Naive thymus-derived CD4-positive, alpha-beta T cell (primary cell): ENCODE measurements at regions of chr7 and their contacts with region 1.

Region 1: DNA sequence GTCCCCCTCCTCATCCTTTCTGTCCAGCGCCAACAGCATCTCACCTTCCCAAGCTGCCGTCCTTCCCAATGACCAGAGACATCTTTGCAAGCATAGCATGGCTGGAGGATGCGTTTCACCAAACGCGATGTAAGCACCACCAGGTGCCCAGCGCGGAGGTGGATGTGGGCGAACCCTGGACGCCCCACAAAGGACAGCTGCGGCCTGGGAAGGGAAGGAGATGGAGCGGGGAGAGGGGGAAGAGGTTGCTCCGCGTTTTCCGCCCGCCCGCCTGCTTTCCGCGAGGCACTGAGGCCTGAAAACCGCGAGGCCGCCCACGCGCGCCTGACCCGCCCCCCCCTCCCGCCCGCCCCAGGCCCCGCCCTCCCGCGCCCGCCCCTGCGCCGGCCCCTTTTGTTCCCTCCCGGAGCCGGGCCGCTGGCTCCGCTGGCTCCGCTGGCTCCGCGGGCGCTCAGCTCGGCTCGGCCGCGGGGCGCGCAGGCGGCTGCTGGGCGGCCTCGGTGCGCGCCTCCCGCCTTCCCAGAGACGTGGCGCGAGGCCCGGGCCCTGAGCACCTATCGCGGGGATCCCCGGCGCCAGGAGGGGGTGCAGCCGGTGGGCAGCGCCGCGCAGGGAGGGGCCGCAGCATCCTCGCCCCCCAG is at the start of gene CLIP2:
- DNase-seq: peak; percentile 38 to 77 (median 64)
- ATAC-seq: peak; percentile 92
- H3K4me3 ChIP-seq: peak within 1 kb of the TSS; percentile 79
- H3K4me3 Mint-ChIP-seq: peak within 1 kb of the TSS; percentile 85 to 91 (median 90)
- H3K27ac ChIP-seq: peak within 1 kb of the TSS; percentile 40
- H3K27ac Mint-ChIP-seq: peak within 1 kb of the TSS in 7 of 9 donors; percentile 69 to 80 (median 76)
- H3K4me1 ChIP-seq: peaks cover 15 to 20% of the 10 kb centered on the region in 2 donors
- H3K4me1 Mint-ChIP-seq: peaks cover 13 to 24% (median 18%) of the 10 kb centered on the region in 7 donors
- H3K27me3 ChIP-seq: no peaks in the 10 kb centered on the region
- H3K27me3 Mint-ChIP-seq: peaks cover 0 to 39% (median 0%) of the 10 kb centered on the region in 5 donors
- total RNA-seq, gene CLIP2: 1.1 to 11.4 (median 3.1) TPM

Region 2: DNA sequence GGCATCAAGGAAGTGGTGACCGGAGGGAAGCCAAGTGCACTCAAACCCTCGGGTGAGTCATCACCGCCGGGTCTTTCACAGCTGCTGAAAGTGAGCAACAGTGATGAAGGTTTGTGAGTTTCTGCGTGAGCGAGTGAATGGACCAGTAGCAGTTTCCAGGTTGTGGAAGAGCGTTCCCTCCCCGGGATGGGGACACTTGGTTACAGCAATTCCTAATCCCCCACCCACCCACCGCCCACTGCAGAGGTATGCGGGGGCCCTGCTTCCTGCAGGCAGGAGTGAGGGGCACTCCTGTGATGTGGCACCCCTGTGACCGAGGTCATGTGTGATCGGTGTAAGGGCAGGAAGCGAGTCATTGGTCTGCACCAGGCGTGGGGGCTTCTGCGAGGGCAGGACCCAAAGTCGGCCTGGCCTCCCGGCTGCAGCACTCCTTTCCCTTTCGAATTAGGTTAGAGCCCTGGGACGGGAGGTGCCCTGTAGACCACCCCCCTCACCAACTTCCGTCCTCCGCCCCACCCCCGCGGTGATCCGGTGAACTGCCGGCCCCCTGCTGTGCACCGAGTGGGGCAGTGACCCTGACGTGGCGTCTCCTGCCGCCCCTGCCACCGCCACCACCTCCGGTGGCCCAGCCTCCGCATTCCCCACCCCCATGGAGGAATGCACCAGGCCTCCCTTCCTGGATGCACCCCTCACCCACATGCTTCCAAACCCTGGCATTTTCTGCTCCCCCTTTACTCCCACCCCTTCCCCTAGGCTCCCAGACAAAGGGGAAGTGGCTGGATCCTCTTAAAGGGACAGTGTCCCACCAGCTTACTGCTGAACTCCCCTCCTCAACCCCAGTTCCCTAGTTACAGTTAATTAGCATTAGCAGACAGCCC is 194.7 kb before region 1 on chr7:
- CTCF ChIA-PET with region 1: no interaction called
- POLR2A ChIA-PET with region 1: no interaction called
- intact Hi-C with region 1: loop called in 1 of 2 experiments (anchors 10 kb)
- DNase-seq: peak; percentile 21 to 71 (median 29)
- ATAC-seq: peak; percentile 83
- H3K4me3 ChIP-seq: peak overlapping the region; percentile 77
- H3K4me3 Mint-ChIP-seq: peak overlapping the region; percentile 83 to 91 (median 88)
- H3K27ac ChIP-seq: peak overlapping the region; percentile 57
- H3K27ac Mint-ChIP-seq: peak overlapping the region; percentile 83 to 98 (median 90)
- H3K4me1 ChIP-seq: peaks cover 11 to 16% of the 10 kb centered on the region in 2 donors
- H3K4me1 Mint-ChIP-seq: peaks cover 3 to 23% (median 16%) of the 10 kb centered on the region in 7 donors
- H3K27me3 ChIP-seq: no peaks in the 10 kb centered on the region
- H3K27me3 Mint-ChIP-seq: no peaks in the 10 kb centered on the region

Region 3: GRCh38 chr7:74173866-74174605 is 115.1 kb before region 1 on chr7 and contains the start of gene EIF4H:
- CTCF ChIA-PET with region 1: no interaction called
- POLR2A ChIA-PET with region 1: no interaction called
- intact Hi-C with region 1: loop called (anchors 1 kb)
- DNase-seq: peak; percentile 90 to 97 (median 95)
- ATAC-seq: peak; percentile 97
- H3K4me3 ChIP-seq: peak within 1 kb of the TSS; percentile 87
- H3K4me3 Mint-ChIP-seq: peak within 1 kb of the TSS; percentile 86 to 98 (median 92)
- H3K27ac ChIP-seq: peak within 1 kb of the TSS; percentile 99
- H3K27ac Mint-ChIP-seq: peak within 1 kb of the TSS; percentile 88 to 97 (median 94)
- H3K4me1 ChIP-seq: peaks cover 41 to 43% of the 10 kb centered on the region in 2 donors
- H3K4me1 Mint-ChIP-seq: peaks cover 32 to 57% (median 47%) of the 10 kb centered on the region in 7 donors
- H3K27me3 ChIP-seq: no peaks in the 10 kb centered on the region
- H3K27me3 Mint-ChIP-seq: no peaks in the 10 kb centered on the region
- total RNA-seq, gene EIF4H: 163 to 284 (median 223) TPM

Region 4: DNA sequence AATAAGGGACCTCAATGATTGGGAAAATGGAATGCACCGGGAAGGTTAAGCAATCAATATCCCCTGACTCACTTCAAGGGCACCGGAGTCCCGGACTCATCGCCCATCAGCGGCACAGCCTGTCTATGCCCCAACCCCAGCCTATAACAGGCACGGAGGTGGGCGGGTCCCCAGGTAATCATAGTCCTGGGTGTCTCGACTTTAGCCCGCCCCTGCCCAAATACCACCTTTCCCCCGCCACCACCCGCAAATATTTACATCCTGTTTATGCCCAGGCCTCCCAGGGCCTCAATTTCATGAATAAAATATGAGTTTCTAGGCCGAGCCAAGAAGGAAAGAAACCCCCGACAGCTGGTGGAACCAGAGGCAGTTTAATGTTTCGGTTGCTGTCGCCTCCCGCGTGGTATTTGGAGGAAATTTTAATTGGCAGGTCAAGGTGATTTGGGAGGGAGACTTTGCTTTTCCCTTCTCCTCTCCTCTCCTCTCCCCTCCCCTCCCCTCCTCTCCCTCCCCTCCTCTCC is 19.3 kb before region 1 on chr7:
- CTCF ChIA-PET with region 1: no interaction called
- POLR2A ChIA-PET with region 1: interaction called, 14 read pairs
- intact Hi-C with region 1: loop called (anchors 1 kb)
- DNase-seq: peak in 8 of 9 donors; percentile 36 to 68 (median 58)
- ATAC-seq: peak; percentile 85
- H3K4me3 ChIP-seq: peak overlapping the region; percentile 58
- H3K4me3 Mint-ChIP-seq: peak overlapping the region; percentile 73 to 94 (median 88)
- H3K27ac ChIP-seq: no peak overlapping the region
- H3K27ac Mint-ChIP-seq: peak overlapping the region in 3 of 9 donors; percentile 33 to 70 (median 51)
- H3K4me1 ChIP-seq: no peaks in the 10 kb centered on the region
- H3K4me1 Mint-ChIP-seq: peaks cover 0 to 14% (median 4%) of the 10 kb centered on the region in 7 donors
- H3K27me3 ChIP-seq: no peaks in the 10 kb centered on the region
- H3K27me3 Mint-ChIP-seq: peaks cover 0 to 23% (median 4%) of the 10 kb centered on the region in 5 donors

Region 5: DNA sequence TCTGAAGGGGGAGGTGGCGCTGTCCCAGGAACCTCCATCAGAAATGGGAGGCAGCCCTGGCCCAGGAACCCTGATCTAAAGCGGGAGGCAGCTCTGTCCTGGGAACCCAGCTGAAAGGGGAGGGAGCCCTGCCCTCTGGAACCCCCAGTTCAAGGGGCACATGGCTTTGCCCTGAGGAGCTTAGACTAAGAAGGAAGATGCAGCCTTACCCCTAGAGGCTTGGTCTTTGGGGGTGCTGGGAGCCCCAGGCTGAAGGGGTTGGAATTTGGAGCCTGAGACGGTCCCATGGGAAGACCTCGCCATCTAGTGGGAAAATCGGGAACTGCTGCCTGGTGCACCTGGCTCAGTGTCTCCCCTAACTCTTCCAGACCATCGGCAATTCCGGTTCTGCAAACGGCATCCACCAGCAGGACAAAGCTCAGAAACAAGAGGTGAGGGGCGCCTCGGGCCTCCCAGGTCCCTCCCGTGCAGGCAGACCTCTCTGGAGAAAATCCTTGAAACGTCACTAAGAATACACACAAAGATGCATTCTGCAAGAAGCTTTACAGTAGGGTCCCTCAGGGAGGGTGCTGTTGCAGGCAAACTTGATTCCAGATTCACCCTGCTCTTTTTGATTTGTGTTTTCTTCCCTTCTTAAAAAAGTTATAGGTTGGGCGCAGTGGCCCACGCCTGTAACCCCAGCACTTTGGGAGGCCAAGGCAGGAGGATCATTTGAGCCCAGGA is 112.2 kb after region 1 on chr7:
- CTCF ChIA-PET with region 1: interaction called, 4 read pairs
- POLR2A ChIA-PET with region 1: no interaction called
- intact Hi-C with region 1: loop called in 1 of 2 experiments (anchors 10 kb)
- DNase-seq: peak; percentile 33 to 77 (median 56)
- ATAC-seq: peak; percentile 76
- H3K4me3 ChIP-seq: no peak overlapping the region
- H3K4me3 Mint-ChIP-seq: no peak overlapping the region
- H3K27ac ChIP-seq: no peak overlapping the region
- H3K27ac Mint-ChIP-seq: no peak overlapping the region
- H3K4me1 ChIP-seq: no peaks in the 10 kb centered on the region
- H3K4me1 Mint-ChIP-seq: peaks cover 0 to 2% (median 0%) of the 10 kb centered on the region in 7 donors
- H3K27me3 ChIP-seq: no peaks in the 10 kb centered on the region
- H3K27me3 Mint-ChIP-seq: no peaks in the 10 kb centered on the region